ENCODE measurements at regions of chr1 and their contacts with region 1.

Region 1: DNA sequence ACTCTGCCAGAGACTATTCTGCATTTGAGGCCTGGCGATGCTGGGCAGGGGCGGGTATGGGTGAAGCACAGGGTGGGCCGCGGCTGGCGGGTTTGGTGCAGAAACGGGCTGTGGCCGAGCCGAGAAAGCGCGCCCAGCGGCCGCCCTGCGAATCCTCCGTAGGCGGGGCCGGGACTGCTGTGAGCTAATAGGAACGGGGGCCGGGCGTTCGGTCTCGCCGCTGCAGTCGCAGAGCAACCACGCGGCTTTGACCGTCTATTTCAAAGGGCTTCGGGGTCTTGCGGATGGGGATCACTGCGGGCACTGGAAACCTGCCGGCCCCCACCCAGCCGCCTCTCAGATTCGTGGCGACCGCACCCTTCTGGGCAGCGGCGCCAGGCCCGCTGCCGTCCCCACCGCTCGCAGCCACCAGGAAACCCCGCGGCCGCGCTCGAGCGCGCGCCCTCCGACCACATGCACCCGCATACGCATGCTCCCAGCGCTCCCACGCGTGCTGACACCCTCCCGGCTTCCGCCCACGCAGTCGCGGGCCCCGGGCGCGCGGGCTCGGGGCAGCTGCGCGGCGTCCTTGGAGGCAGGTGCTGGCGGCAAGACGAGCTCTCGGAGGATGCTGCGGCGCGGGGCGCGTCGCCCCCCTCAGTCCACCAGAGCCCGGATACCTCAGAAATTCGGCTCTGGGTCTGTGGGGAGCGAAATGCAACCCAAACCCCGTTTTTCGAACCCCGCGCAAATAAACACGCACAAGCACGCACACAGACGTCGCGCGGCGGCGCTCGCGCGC is 32.6 kb downstream of the DNTTIP2 start:
- DNase-seq: peak in 1 of 2 experiments; percentile 91
- H3K4me3 ChIP-seq: peak overlapping the region; percentile 73 to 93 (median 82)
- H3K27ac ChIP-seq: no peak overlapping the region
- H3K4me1 ChIP-seq: peaks cover 0 to 7% (median 2%) of the 10 kb centered on the region in 4 experiments; a peak in 2 of 7 replicates
- H3K27me3 ChIP-seq: no peaks in the 10 kb centered on the region; a peak in 1 of 7 replicates
- CTCF ChIP-seq: peak; percentile 13 to 27 (median 26); a peak in 3 of 4 replicates
- EP300 ChIP-seq: no peak
- POLR2A ChIP-seq: peak in 1 of 2 experiments; percentile 68; a peak in 2 of 3 replicates
- RAD21 ChIP-seq: peak in 1 of 2 experiments; percentile 23; a peak in 2 of 4 replicates

Region 2: DNA sequence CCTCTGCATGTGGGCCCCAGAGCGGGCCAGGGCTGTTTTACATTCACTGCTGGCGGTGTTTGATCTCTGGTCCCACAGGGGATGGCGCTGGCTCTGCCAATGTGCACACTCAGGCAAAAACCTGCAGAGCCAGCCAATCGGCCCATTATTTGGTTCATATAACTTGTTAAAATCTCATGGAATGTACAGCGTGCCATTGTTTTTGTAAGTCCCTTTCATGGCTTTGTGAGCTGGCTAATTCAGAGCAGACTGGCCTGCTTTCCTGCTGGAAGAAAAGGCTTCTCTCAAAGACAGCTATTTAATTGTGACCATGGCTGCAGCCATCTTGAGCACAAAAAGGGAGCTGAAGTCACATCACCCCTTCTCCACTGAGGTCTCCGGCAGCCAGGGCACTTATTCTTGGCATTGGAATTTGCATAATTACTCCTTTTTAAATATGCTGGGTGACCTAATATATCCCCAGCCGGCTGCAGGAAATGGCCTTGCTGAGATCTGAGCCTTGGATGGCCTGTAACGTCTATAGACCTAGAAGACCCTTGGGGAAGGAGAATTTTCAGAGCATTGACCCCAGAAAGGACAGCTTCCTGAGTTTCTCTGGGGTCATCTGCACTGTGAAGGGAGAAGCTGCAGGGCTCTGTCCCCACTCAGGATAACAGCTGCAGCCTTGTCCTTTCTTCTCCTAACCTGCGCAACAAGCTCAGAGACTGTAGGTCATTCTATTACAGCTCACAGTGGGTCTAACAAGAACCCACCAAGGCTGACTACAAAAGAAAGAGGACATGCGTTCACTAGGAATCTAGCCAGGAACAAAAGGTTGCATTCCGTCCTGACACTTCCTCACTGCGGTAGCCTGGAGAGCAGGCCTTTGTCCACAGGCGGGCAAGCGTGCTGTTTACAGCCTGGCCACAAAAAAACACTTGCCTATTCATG is 210.5 kb before region 1 on chr1:
- CTCF ChIA-PET with region 1: interaction called, 324 read pairs
- POLR2A ChIA-PET with region 1: interaction called, 7 read pairs
- DNase-seq: peak in 1 of 2 experiments; percentile 71
- H3K4me3 ChIP-seq: peak overlapping the region in 3 of 4 experiments; percentile 8 to 19 (median 12); a peak in 3 of 8 replicates
- H3K27ac ChIP-seq: peak overlapping the region; percentile 79; the same call in 1 of the 2 replicates
- H3K4me1 ChIP-seq: peaks cover 0 to 16% (median 12%) of the 10 kb centered on the region in 4 experiments; a peak in 6 of 7 replicates
- H3K27me3 ChIP-seq: no peaks in the 10 kb centered on the region
- CTCF ChIP-seq: no peak
- EP300 ChIP-seq: peak in 1 of 2 experiments; percentile 67; a peak in 1 of 3 replicates
- POLR2A ChIP-seq: peak in 1 of 2 experiments; percentile 55; a peak in 1 of 3 replicates
- RAD21 ChIP-seq: 0 out of 4 replicates have a peak, but pooled peaks have one; percentile 2 to 4

Region 3: GRCh38 chr1:93666613-93667384 is 179.6 kb before region 1 on chr1:
- CTCF ChIA-PET with region 1: interaction called, 13 read pairs
- POLR2A ChIA-PET with region 1: no interaction called
- DNase-seq: no peak
- H3K4me3 ChIP-seq: no peak overlapping the region
- H3K27ac ChIP-seq: no peak overlapping the region
- H3K4me1 ChIP-seq: peaks cover 6 to 26% (median 16%) of the 10 kb centered on the region in 4 experiments
- H3K27me3 ChIP-seq: no peaks in the 10 kb centered on the region
- CTCF ChIP-seq: no peak
- EP300 ChIP-seq: no peak
- POLR2A ChIP-seq: no peak
- RAD21 ChIP-seq: no peak

Region 4: GRCh38 chr1:93798301-93798700 is 48.1 kb before region 1 on chr1:
- CTCF ChIA-PET with region 1: interaction called, 10 read pairs
- POLR2A ChIA-PET with region 1: interaction called, 3 read pairs
- DNase-seq: no peak
- H3K4me3 ChIP-seq: no peak overlapping the region
- H3K27ac ChIP-seq: no peak overlapping the region
- H3K4me1 ChIP-seq: no peaks in the 10 kb centered on the region
- H3K27me3 ChIP-seq: no peaks in the 10 kb centered on the region
- CTCF ChIP-seq: no peak
- EP300 ChIP-seq: no peak
- POLR2A ChIP-seq: no peak
- RAD21 ChIP-seq: no peak

Region 5: GRCh38 chr1:93827633-93828366 is 18.6 kb before region 1 on chr1:
- CTCF ChIA-PET with region 1: interaction called, 266 read pairs
- POLR2A ChIA-PET with region 1: interaction called, 8 read pairs
- DNase-seq: no peak
- H3K4me3 ChIP-seq: no peak overlapping the region
- H3K27ac ChIP-seq: no peak overlapping the region
- H3K4me1 ChIP-seq: peaks cover 2 to 10% (median 6%) of the 10 kb centered on the region in 4 experiments; a peak in 4 of 7 replicates
- H3K27me3 ChIP-seq: no peaks in the 10 kb centered on the region
- CTCF ChIP-seq: no peak
- EP300 ChIP-seq: no peak
- POLR2A ChIP-seq: no peak
- RAD21 ChIP-seq: no peak

Region 6: DNA sequence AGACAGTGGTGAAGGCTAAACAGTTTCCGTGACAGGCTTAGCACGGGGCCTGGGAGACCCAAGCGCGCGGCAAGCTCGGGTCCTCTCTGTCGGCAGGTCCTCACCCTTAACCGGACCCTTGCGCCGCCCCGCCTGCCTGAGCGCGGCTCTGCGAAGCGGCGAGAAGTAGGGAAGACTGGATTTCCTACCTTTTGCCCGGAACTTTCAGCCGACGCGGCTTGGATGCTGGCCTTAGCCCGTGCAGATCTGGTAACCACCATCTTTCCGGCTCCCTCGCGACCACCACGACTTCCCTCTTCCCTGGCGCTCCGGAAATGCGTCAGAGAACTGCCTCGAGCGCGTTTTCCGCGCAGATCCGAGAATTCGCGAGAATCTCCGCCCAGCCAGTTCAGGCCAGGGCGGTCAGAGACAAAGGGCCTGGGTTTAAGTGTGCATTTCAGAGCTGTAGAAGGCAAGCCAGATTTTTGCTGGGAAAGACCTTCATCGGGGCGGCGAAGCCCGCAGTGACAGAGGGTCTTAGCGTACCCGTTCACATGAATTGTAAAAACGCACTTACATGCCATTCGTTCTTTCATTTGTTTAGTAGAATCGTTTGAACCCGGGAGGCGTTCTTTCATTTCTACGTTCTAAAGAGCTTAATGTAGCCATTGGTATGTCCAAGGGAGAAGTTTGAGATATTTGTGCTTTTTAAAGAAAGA is 32.6 kb after region 1 on chr1 and contains the start of gene DNTTIP2:
- CTCF ChIA-PET with region 1: interaction called, 3 read pairs
- POLR2A ChIA-PET with region 1: interaction called, 14 read pairs
- DNase-seq: peak; percentile 60 to 92
- H3K4me3 ChIP-seq: peak within 1 kb of the TSS; percentile 96 to 99 (median 97)
- H3K27ac ChIP-seq: peak within 1 kb of the TSS; percentile 86
- H3K4me1 ChIP-seq: peaks cover 0 to 2% (median 0%) of the 10 kb centered on the region in 4 experiments; a peak in 5 of 7 replicates
- H3K27me3 ChIP-seq: no peaks in the 10 kb centered on the region
- CTCF ChIP-seq: no peak
- EP300 ChIP-seq: no peak
- POLR2A ChIP-seq: peak; percentile 96 to 98
- RAD21 ChIP-seq: no peak
- total RNA-seq, gene DNTTIP2: 80.4 and 84.2 TPM in 2 replicates